Activated CD8-positive, alpha-beta T cell treated with anti-CD3 and anti-CD28 coated beads for 36 hours (primary cell): ENCODE measurements at regions of chr6 and their contacts with region 1.

Region 1: GRCh38 chr6:118709859-118710350 is 58.5 kb upstream of the CEP85L start:
- DNase-seq: peak; percentile 90
- ATAC-seq: peak; percentile 76
- H3K4me3 Mint-ChIP-seq: peak overlapping the region; percentile 99
- H3K27ac Mint-ChIP-seq: peak overlapping the region; percentile 98
- H3K4me1 Mint-ChIP-seq: peaks cover 71% of the 10 kb centered on the region
- H3K27me3 Mint-ChIP-seq: no peaks in the 10 kb centered on the region
- CTCF ChIP-seq: no peak

Region 2: DNA sequence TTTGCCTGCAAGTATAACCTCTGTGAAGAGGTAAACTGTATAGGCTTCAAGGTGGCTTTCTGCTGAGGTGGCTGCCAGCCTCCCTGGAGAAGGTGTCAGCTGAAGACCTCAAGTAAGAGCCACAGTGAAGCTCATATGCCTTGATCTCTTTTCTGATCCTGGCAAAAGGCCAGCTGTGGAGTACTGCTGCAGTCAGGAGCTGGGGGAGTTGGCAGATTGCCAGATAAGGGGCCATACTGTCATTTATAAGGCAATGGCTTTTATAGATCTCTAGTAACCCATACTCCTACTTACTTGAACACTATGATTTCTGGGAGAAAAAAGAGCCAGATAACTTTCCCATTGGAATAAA is 49.7 kb before region 1 on chr6:
- CTCF ChIA-PET with region 1: interaction called, 4 read pairs
- POLR2A ChIA-PET with region 1: interaction called, 11 read pairs
- intact Hi-C with region 1: loop called (anchors 5 kb)
- DNase-seq: peak; percentile 81
- ATAC-seq: peak; percentile 52
- H3K4me3 Mint-ChIP-seq: peak overlapping the region; percentile 45
- H3K27ac Mint-ChIP-seq: peak overlapping the region; percentile 87
- H3K4me1 Mint-ChIP-seq: peaks cover 74% of the 10 kb centered on the region
- H3K27me3 Mint-ChIP-seq: no peaks in the 10 kb centered on the region
- CTCF ChIP-seq: no peak

Region 3: DNA sequence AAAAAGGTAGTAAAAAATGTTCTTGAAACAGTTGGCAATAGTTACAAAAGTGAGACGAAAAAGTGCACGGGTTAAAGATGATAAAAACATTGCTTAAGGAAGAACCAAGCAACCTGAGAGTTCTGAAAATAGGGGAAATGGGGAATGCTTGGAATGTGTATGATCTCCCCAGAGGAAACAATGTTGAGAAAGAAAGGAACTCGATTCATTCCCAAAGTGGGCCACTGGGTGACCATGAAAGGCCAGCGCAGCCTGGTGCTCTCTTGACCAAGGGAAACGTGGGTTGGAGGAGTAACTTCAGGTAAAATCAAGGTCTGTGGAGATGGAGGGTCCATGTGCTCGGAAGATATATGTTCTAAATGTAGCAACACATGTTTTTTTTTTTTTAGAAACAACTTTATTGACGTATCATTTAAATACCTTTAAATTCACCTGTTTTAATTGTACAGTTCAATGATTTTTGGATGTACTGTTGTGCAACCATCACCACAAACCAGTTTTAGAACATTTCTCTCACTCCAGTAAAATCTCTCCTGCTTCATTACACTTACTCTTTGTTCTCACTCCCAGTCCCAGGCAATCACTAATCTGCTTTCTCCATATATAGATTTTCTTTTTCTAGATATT is 24.0 kb before region 1 on chr6:
- CTCF ChIA-PET with region 1: interaction called, 4 read pairs
- POLR2A ChIA-PET with region 1: interaction called, 19 read pairs
- intact Hi-C with region 1: loop called (anchors 2 kb)
- DNase-seq: no peak
- ATAC-seq: no peak
- H3K4me3 Mint-ChIP-seq: no peak overlapping the region
- H3K27ac Mint-ChIP-seq: peak overlapping the region; percentile 19
- H3K4me1 Mint-ChIP-seq: peaks cover 71% of the 10 kb centered on the region
- H3K27me3 Mint-ChIP-seq: no peaks in the 10 kb centered on the region
- CTCF ChIP-seq: no peak

Region 4: DNA sequence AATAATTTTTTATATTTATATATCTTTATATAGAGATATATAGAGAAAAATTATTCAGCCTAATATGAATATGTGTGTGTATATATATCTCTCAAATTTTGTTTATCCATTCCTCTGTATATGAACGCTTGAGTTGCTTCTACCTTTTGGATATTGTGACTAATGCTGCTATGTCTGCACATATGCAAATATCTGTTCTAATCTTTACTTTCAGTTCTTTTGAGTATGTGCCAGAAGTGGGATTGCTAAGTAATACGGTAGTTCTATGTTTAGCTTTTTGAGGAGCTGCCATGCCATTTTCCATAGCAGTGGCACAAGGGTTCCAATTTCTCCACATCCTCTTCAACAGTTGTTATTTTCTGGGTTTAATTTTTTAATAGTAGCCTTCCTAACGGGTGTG is 14.3 kb after region 1 on chr6:
- CTCF ChIA-PET with region 1: interaction called, 13 read pairs
- POLR2A ChIA-PET with region 1: interaction called, 39 read pairs
- intact Hi-C with region 1: loop called (anchors 1 kb)
- DNase-seq: no peak
- ATAC-seq: peak; percentile 42
- H3K4me3 Mint-ChIP-seq: peak overlapping the region; percentile 47
- H3K27ac Mint-ChIP-seq: peak overlapping the region; percentile 87
- H3K4me1 Mint-ChIP-seq: peaks cover 82% of the 10 kb centered on the region
- H3K27me3 Mint-ChIP-seq: no peaks in the 10 kb centered on the region
- CTCF ChIP-seq: no peak

Region 5: GRCh38 chr6:118755941-118756646 is 46.2 kb after region 1 on chr6:
- CTCF ChIA-PET with region 1: no interaction called
- POLR2A ChIA-PET with region 1: interaction called, 12 read pairs
- intact Hi-C with region 1: no loop called
- DNase-seq: peak; percentile 77
- ATAC-seq: peak; percentile 90
- H3K4me3 Mint-ChIP-seq: peak overlapping the region; percentile 58
- H3K27ac Mint-ChIP-seq: peak overlapping the region; percentile 95
- H3K4me1 Mint-ChIP-seq: peaks cover 42% of the 10 kb centered on the region
- H3K27me3 Mint-ChIP-seq: no peaks in the 10 kb centered on the region
- CTCF ChIP-seq: no peak

Region 6: GRCh38 chr6:118776607-118777549 is 67.0 kb after region 1 on chr6:
- CTCF ChIA-PET with region 1: interaction called, 12 read pairs
- POLR2A ChIA-PET with region 1: interaction called, 6 read pairs
- intact Hi-C with region 1: loop called (anchors 5 kb)
- DNase-seq: peak; percentile 88
- ATAC-seq: peak; percentile 92
- H3K4me3 Mint-ChIP-seq: no peak overlapping the region
- H3K27ac Mint-ChIP-seq: peak overlapping the region; percentile 54
- H3K4me1 Mint-ChIP-seq: peaks cover 23% of the 10 kb centered on the region
- H3K27me3 Mint-ChIP-seq: no peaks in the 10 kb centered on the region
- CTCF ChIP-seq: peak; percentile 87

Region 7: DNA sequence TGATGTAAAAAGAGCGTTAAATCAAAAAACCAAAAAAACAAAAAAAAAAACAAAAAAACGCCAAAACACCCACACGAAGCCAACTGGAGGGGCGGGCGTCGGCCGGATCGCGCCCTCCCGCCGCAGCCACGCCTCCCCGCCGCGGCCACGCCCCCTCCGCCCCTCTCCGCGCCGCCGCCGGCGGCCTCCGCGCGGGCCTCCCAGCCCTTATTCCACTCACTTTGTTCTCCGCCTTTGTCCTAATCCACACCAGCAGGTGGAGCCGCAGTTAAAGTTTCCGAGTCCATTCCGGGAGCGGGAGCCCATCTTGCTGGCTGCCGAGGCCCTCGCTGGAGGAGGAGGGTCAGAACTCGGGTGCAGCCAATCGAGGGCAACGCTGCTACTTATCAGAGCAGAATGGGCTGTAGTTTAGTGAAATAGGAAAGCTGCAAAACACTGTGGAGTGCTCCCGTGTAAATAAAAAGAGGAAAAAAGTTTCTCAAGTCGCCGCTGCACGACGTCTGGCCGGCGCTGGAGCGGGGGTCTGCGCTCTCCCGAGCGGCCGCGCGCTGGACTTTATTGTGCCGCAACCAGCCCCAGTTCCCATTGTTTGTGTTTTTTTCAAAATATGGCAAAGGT is 184.0 kb after region 1 on chr6 and contains the start of gene ASF1A:
- CTCF ChIA-PET with region 1: interaction called, 6 read pairs
- POLR2A ChIA-PET with region 1: interaction called, 13 read pairs
- intact Hi-C with region 1: loop called (anchors 5 kb)
- DNase-seq: peak; percentile 97
- ATAC-seq: peak; percentile 77
- H3K4me3 Mint-ChIP-seq: peak within 1 kb of the TSS; percentile 91
- H3K27ac Mint-ChIP-seq: peak within 1 kb of the TSS; percentile 99
- H3K4me1 Mint-ChIP-seq: peaks cover 55% of the 10 kb centered on the region
- H3K27me3 Mint-ChIP-seq: no peaks in the 10 kb centered on the region
- CTCF ChIP-seq: peak; percentile 8
- total RNA-seq, gene ASF1A: 36.4 to 39.0 TPM